ENCODE measurements at regions of chr11 and their contacts with region 1.

Region 1: GRCh38 chr11:34512840-34513681 is 533 bp downstream of the ELF5 start:
- DNase-seq: peak; percentile 63 to 78 (median 75)
- H3K4me3 ChIP-seq: no peak overlapping the region
- H3K27ac ChIP-seq: no peak overlapping the region
- H3K4me1 ChIP-seq: peaks cover 0 to 10% (median 2%) of the 10 kb centered on the region in 4 experiments
- H3K27me3 ChIP-seq: no peaks in the 10 kb centered on the region

Region 2: DNA sequence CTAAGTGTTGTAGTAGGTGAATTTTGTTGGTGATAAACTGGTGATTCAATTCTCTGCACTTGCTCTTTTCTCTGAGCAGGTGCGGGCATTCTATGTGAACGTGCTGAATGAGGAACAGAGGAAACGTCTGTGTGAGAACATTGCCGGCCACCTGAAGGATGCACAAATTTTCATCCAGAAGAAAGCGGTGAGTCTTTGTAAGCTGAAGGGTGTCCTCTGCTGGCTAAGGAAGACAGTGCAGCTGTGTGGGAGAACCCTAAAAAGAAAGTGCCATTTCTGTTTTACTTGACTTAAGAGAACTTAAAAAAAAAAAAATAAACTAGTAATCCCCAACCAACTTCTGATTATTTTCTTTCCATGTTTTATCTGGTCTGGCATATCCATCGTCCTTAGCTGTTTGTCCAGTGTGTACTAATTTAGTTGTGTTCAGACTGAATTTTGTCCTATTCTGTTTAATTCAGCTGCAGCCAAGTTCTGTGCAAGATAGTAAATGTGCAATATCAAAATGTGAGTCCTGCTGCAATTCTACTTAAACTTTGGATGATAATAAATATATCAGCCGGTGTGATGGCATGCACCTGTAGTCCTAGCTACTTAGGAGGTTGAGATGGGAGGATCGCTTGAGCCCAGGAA is 44.7 kb before region 1 on chr11:
- CTCF ChIA-PET with region 1: no interaction called
- POLR2A ChIA-PET with region 1: no interaction called
- DNase-seq: peak; percentile 58 to 84 (median 83)
- H3K4me3 ChIP-seq: no peak overlapping the region
- H3K27ac ChIP-seq: no peak overlapping the region
- H3K4me1 ChIP-seq: peaks cover 0 to 7% (median 0%) of the 10 kb centered on the region in 4 experiments
- H3K27me3 ChIP-seq: no peaks in the 10 kb centered on the region

Region 3: GRCh38 chr11:34502949-34503348 is 10.1 kb before region 1 on chr11:
- CTCF ChIA-PET with region 1: interaction called, 17 read pairs
- POLR2A ChIA-PET with region 1: no interaction called
- DNase-seq: peak in 1 of 3 donors; percentile 5
- H3K4me3 ChIP-seq: no peak overlapping the region
- H3K27ac ChIP-seq: no peak overlapping the region
- H3K4me1 ChIP-seq: peaks cover 0 to 15% (median 2%) of the 10 kb centered on the region in 4 experiments
- H3K27me3 ChIP-seq: no peaks in the 10 kb centered on the region

Region 4: DNA sequence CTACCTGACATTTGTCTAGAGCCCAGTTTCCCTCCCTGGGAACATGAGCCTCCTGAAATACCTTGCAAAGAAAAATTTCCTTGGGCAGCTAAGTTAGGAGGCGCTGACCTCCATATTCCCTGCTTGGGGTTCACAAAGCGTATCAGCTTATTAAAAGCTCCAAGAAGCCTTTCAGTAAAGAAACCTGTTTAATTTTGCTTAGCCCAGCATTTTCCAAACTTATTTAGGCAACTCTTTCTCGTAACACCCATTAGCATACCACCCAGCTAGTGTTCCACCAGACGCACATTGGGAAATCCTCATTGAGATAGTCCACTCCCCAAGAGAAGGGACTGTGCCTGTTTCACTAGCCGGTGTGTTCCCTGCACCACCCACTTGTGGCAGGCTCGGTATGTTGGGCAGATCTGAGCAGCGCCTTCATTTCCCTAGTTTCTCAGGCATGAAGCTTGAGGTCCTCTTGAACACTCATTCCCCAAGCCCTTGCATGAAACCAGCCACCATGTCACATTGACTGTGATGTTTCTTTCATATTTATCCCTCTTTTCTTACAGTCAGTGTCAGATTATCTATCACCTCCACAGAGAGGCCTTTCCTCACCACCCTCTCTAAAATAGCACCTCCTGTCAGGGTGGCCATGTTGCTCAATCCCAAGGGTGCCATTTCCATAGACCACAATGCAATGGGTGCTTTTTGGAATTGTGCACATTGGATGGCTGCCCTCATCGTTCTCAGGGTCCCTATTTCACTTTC is 13.0 kb after region 1 on chr11:
- CTCF ChIA-PET with region 1: interaction called, 19 read pairs
- POLR2A ChIA-PET with region 1: no interaction called
- DNase-seq: no peak
- H3K4me3 ChIP-seq: no peak overlapping the region
- H3K27ac ChIP-seq: no peak overlapping the region
- H3K4me1 ChIP-seq: no peaks in the 10 kb centered on the region
- H3K27me3 ChIP-seq: peaks cover 0 to 2% (median 0%) of the 10 kb centered on the region in 5 experiments

Region 5: DNA sequence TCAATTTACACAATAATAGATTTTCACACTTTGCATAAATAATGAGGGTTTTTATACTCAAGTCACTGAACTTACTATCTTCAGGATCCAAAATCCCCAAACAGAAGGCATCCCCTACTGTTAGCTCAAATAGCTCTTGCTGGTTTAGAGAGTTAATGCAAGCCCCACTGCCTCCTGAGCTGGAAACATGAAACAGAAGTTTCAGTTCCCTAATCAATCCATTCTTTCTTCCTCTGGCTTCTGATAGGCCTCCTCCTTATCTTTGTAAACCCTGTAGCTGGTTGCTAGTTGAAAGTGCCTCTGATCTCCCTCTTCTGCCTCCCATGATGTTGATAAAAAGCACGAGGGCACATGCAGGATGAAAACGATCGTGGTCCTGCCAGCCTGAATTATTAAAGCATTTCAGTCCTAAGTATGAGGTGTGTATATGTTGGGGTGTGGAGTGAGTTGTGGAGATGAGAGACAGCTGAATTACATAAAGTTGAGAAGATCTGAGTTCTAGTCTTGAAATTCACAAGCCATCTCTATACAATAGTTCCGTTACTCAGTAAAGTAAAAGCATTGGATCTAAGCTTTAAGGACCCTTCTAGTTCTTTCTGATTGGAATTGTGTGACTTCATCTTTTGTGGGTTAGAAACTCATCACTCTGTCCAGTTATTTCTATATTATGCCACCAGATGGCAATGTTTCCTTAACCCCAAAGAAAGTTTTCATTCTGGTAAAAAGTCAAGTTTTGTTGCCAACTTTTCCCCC is 72.8 kb after region 1 on chr11:
- CTCF ChIA-PET with region 1: interaction called, 19 read pairs
- POLR2A ChIA-PET with region 1: no interaction called
- DNase-seq: peak; percentile 67 to 83 (median 81)
- H3K4me3 ChIP-seq: peak overlapping the region in 4 of 7 experiments; percentile 37 to 62 (median 45)
- H3K27ac ChIP-seq: peak overlapping the region in 1 of 2 experiments; percentile 73
- H3K4me1 ChIP-seq: peaks cover 4 to 11% (median 8%) of the 10 kb centered on the region in 4 experiments
- H3K27me3 ChIP-seq: no peaks in the 10 kb centered on the region

Region 6: GRCh38 chr11:34624069-34624468 is 111.0 kb after region 1 on chr11:
- CTCF ChIA-PET with region 1: no interaction called
- POLR2A ChIA-PET with region 1: no interaction called
- DNase-seq: no peak
- H3K4me3 ChIP-seq: no peak overlapping the region
- H3K27ac ChIP-seq: no peak overlapping the region
- H3K4me1 ChIP-seq: peaks cover 0 to 13% (median 0%) of the 10 kb centered on the region in 4 experiments
- H3K27me3 ChIP-seq: no peaks in the 10 kb centered on the region

Region 7: GRCh38 chr11:34890812-34891211 is 377.8 kb after region 1 on chr11:
- CTCF ChIA-PET with region 1: interaction called, 30 read pairs
- POLR2A ChIA-PET with region 1: no interaction called
- DNase-seq: peak; percentile 59 to 75 (median 74)
- H3K4me3 ChIP-seq: no peak overlapping the region
- H3K27ac ChIP-seq: no peak overlapping the region
- H3K4me1 ChIP-seq: no peaks in the 10 kb centered on the region
- H3K27me3 ChIP-seq: no peaks in the 10 kb centered on the region